HEK293T (cell line): ENCODE measurements at regions of chr11 and their contacts with region 1.

Region 1: DNA sequence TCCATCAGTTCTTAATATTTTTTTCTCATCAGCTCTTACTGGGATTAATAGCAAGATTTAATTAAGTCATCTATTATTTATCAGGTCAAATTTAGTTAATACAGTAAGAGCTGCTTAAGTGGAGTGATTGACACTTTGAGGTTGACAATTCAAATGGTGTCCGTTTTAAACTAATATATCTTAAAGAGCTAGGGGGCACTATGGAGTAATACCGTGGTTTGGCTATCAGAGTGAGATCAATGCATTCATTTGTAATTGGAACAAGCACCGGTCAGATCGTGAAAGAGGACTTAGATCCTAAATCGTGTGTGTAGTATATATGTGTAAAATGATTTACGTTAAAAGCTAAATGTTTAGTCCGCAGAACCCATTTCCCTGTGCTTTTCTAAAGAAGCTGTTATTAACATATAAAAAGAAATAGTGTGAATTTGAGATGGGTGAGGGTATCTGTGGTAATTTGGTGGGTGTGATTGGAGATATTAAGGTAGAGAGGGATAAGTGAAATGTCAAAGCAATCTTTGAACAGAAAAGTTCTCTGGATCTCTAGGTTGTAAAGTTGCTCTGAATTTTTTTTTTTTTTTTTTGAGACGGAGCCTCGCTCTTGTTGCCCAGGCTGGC is 2.3 kb downstream of the SIK2 start:
- DNase-seq: peak; percentile 42

Region 2: DNA sequence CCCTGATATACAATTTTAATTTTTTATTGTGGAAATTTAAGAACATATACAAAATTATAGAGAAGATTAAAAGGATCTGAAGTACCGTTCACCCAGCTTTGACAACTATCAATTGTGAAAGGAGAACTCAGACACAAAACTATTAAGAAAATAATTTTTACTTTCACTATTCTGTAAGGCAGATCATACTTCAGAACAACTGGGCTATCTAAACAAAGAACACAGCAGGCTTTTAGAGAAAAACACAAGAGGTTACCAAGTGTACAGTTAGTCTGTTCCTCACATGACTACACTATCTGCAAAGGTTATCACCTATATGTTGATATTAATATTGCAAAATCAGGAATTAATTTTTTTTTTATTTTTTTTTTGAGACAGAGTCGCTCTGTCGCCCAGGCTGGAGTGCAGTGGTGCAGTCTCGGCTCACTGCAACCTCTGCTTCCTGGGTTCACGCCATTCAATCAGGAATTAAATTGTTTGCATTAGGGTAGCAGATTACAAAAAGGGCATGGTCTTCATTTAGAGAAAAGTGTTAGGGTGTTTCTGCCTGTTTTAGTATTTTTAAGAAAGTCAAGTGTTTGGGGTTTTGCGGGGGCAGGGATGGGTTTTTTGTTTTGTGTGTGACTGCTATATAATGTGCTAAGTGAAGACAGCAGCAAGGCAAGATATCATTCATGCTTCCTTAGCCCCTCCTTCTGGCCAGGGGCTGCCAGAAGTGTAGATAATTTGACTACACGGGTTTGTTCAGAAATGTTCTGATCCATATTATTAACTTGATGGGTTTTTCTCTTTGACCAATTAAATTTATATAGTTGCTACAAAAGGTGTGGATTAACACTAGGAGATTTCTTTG is 29.9 kb before region 1 on chr11:
- CTCF ChIA-PET with region 1: no interaction called
- POLR2A ChIA-PET with region 1: no interaction called
- DNase-seq: no peak

Region 3: DNA sequence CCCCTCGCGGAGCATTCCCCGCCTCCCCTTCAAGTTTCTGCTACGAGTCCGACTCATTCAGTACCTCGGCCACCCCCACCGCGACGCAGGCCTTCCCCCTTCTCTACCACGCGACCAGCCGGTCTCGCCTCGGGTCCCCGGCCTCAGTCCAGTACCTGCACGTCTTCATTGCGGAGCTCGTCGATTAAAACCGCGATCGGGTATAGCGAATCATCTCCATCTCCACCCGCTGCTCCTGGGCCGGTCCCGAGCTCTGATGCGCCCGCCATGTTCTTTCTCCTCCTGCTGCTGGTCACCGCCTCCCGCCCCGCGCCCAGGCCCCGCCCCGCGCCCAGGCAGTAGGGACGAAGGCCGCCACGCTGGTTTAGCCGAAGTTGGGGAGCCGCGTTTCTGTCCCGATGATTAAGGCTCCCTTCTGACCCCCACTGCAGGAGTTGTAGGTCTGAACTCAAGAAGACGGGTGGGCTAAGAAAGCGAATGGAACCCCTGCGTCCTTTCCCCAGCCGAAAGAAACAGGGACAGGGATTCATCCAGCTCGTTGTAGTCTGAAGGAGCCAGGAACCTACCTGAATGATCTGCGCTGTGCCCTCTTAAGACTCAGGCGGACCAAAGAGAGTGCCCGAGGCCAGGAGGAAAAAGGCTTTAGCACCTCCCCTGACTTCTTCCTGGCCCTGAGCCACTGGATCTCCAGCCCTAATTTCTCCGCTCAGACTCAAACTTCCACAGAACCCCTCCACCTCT is 161.8 kb after region 1 on chr11 and contains the start of gene PPP2R1B:
- CTCF ChIA-PET with region 1: interaction called, 10 read pairs
- POLR2A ChIA-PET with region 1: interaction called, 6 read pairs
- DNase-seq: peak; percentile 96